Common myeloid progenitor, CD34-positive (primary cell): ENCODE measurements at regions of chr18 and their contacts with region 1.

Region 1: DNA sequence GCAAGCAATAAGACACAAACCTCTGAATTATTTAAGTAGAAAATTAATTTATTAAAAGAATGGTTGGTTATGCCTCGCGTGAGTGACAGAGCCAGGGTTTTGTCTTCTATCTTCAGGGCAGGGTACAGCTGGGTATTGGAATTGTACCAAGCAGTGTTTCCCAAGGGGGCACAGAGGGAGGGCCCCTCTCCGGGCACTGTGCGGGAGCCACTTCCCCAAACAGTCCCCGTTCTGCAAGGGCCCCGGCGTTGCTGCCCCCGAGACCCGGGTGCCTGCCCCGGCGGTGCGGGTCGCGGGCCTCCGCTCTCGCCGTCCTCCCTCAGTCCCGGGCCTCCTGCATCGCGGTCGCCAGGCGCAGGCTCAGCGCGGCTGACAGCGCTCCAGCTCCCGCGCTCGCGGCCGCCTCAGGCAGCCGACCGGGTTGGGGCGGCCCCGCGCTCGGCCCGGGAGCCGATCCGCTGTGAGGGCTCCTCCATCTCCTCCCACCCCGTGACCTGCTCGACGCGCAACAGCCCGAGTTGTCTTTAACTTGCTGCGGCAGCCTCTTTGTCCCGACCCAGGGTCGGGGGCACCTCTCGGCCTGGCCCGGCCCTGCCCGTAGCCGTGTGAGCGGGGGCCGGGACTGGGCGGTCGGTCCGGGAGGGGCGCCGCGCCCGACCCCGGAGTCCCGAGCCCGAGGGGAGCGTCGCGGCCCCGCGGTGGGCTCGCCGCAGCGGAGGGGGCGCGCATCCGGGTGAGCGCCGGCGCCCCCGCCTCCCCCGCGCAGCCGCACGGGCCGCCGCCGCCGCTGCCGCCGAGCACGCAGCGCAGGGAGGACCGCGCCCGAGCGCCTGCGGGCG is 620 bp upstream of the GALNT1 start:
- DNase-seq: peak; percentile 73 to 89 (median 83)
- H3K4me3 ChIP-seq: peak overlapping the region; percentile 67 to 84 (median 79)
- H3K27ac ChIP-seq: peak overlapping the region; percentile 56 to 89
- H3K4me1 ChIP-seq: peaks cover 6 to 22% (median 15%) of the 10 kb centered on the region in 4 experiments
- H3K27me3 ChIP-seq: no peaks in the 10 kb centered on the region

Region 2: DNA sequence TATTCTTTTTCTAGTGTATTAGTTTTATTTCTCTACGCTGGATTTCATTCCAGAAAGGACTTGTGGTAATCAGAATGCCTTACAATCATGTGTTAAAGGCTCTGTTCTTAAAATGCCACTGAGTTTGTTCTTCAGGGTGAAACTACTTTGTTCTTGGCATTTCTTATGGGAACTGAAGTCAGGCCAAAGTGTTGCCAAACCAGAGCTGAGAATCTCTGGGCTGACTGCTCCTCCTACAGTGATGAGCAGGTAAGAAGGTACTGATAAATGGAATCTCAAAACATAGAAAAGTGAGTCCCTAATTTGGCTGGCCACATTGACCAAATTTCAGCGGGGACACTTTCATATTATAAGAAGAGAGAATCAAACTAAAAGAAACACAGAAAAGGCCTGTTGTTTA is 395.1 kb before region 1 on chr18:
- CTCF ChIA-PET with region 1: no interaction called
- POLR2A ChIA-PET with region 1: no interaction called
- DNase-seq: peak in 1 of 3 donors; percentile 2
- H3K4me3 ChIP-seq: no peak overlapping the region
- H3K27ac ChIP-seq: no peak overlapping the region
- H3K4me1 ChIP-seq: no peaks in the 10 kb centered on the region
- H3K27me3 ChIP-seq: no peaks in the 10 kb centered on the region

Region 3: GRCh38 chr18:35283923-35284794 is 296.8 kb before region 1 on chr18:
- CTCF ChIA-PET with region 1: no interaction called
- POLR2A ChIA-PET with region 1: interaction called, 11 read pairs
- DNase-seq: peak in 2 of 3 donors; percentile 43 to 61
- H3K4me3 ChIP-seq: peak overlapping the region in 1 of 7 experiments; percentile 25
- H3K27ac ChIP-seq: no peak overlapping the region
- H3K4me1 ChIP-seq: peaks cover 0 to 2% (median under 1%) of the 10 kb centered on the region in 4 experiments
- H3K27me3 ChIP-seq: no peaks in the 10 kb centered on the region

Region 4: DNA sequence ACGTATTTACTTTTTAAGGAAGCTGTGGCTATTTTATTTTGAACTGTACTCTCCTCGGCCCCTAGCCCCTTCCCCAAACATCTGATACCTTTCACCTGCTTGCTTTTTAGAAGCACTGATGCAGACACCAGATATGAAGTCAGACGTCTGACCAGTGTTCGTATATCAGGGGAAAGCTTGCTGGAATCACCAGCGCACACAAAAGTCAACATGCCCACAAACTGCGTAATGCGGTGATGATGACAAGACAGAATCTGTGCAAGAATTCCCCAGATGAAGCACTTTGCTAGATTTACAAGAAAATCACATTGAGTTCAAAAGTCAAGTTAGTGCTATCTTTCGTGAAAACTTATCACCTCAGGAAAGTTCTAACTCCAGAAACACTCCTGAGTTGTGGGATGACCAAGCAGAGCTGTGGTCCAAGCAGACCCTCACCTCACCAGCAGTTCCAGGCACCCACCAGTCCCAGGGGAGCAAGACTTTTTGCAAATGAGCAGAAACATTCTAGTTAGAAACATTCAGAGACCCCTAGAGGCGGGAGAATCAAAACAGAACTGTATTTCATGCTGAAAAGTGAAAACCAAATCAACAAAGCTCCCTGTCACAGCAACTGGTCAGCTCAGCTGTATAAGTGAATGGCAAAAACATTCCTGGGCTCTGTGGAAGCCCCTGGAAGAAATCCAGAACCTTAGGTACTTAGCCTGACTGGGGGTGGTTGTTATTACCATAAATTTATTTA is 138.9 kb before region 1 on chr18:
- CTCF ChIA-PET with region 1: no interaction called
- POLR2A ChIA-PET with region 1: no interaction called
- DNase-seq: no peak
- H3K4me3 ChIP-seq: no peak overlapping the region
- H3K27ac ChIP-seq: no peak overlapping the region
- H3K4me1 ChIP-seq: peaks cover 0 to 21% (median 4%) of the 10 kb centered on the region in 4 experiments
- H3K27me3 ChIP-seq: no peaks in the 10 kb centered on the region

Region 5: GRCh38 chr18:35736696-35737095 is 155.8 kb after region 1 on chr18:
- CTCF ChIA-PET with region 1: no interaction called
- POLR2A ChIA-PET with region 1: no interaction called
- DNase-seq: no peak
- H3K4me3 ChIP-seq: no peak overlapping the region
- H3K27ac ChIP-seq: no peak overlapping the region
- H3K4me1 ChIP-seq: no peaks in the 10 kb centered on the region
- H3K27me3 ChIP-seq: no peaks in the 10 kb centered on the region